Naive thymus-derived CD4-positive, alpha-beta T cell (primary cell): ENCODE measurements at regions of chr7 and their contacts with region 1.

Region 1: DNA sequence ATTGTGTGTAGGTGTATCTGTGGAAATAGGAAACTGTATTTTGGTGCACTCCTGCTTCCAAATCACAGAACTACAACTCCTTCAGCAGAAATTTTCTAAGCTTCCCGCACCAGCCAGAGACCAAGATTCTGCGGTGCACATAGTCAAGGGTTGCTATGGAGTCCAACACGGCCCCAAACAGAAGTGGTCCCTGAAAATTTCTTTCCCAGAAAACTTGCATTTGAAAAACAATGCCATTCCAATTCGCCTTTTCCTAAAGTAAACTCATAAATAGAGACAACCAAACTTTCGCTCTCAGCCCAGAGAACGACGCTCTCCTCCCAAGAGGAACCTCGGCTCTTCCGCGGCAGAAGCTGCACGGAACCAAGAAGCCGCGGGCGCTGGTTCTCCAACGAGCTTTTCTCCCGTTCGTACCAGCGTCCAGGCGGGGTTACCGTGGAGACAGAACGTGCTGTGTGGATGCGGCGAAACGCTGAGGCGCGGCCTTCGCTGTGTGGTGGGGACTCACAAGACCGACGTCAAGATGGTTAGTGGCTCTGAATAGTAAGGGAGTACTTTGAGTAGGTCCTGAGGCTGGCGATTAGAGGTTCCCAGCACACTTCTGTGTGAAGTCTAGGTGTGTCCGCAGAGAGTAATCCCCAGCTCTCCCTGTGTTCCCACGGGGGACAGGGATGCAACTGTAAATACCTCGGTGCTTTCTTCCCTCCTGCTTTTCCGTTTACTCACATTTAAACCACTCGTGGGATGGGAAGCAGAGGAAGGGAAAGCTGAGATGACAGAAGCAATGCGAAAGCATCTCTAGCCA is 24.0 kb upstream of the ZC3HAV1 start:
- DNase-seq: peak; percentile 68 to 86 (median 83)
- ATAC-seq: peak; percentile 98
- H3K4me3 ChIP-seq: peak overlapping the region; percentile 86
- H3K4me3 Mint-ChIP-seq: peak overlapping the region; percentile 85 to 96 (median 90)
- H3K27ac ChIP-seq: peak overlapping the region; percentile 72
- H3K27ac Mint-ChIP-seq: peak overlapping the region; percentile 76 to 95 (median 85)
- H3K4me1 ChIP-seq: peaks cover 0 to 10% of the 10 kb centered on the region in 2 donors
- H3K4me1 Mint-ChIP-seq: peaks cover 11 to 33% (median 16%) of the 10 kb centered on the region in 7 donors
- H3K27me3 ChIP-seq: no peaks in the 10 kb centered on the region
- H3K27me3 Mint-ChIP-seq: peaks cover 0 to 5% (median 0%) of the 10 kb centered on the region in 5 donors

Region 2: GRCh38 chr7:137343281-137343841 is 1790.2 kb before region 1 on chr7 and contains the start of gene PTN:
- CTCF ChIA-PET with region 1: no interaction called
- POLR2A ChIA-PET with region 1: no interaction called
- intact Hi-C with region 1: no loop called
- DNase-seq: no peak
- ATAC-seq: no peak
- H3K4me3 ChIP-seq: no peak within 1 kb of the TSS
- H3K4me3 Mint-ChIP-seq: no peak within 1 kb of the TSS
- H3K27ac ChIP-seq: no peak within 1 kb of the TSS
- H3K27ac Mint-ChIP-seq: no peak within 1 kb of the TSS
- H3K4me1 ChIP-seq: no peaks in the 10 kb centered on the region
- H3K4me1 Mint-ChIP-seq: peaks cover 0 to 2% (median 0%) of the 10 kb centered on the region in 7 donors
- H3K27me3 ChIP-seq: no peaks in the 10 kb centered on the region
- H3K27me3 Mint-ChIP-seq: peaks cover 9 to 30% (median 15%) of the 10 kb centered on the region in 5 donors
- total RNA-seq, gene PTN: not detected

Region 3: GRCh38 chr7:138898255-138898654 is 235.3 kb before region 1 on chr7:
- CTCF ChIA-PET with region 1: no interaction called
- POLR2A ChIA-PET with region 1: interaction called, 5 read pairs
- intact Hi-C with region 1: loop called (anchors 5 kb)
- DNase-seq: peak in 4 of 9 donors; percentile 14 to 36 (median 18)
- ATAC-seq: peak; percentile 49
- H3K4me3 ChIP-seq: no peak overlapping the region
- H3K4me3 Mint-ChIP-seq: peak overlapping the region in 7 of 10 donors; percentile 12 to 56 (median 27)
- H3K27ac ChIP-seq: no peak overlapping the region
- H3K27ac Mint-ChIP-seq: peak overlapping the region in 7 of 9 donors; percentile 16 to 75 (median 46)
- H3K4me1 ChIP-seq: peaks cover 9 to 26% of the 10 kb centered on the region in 2 donors
- H3K4me1 Mint-ChIP-seq: peaks cover 20 to 53% (median 48%) of the 10 kb centered on the region in 7 donors
- H3K27me3 ChIP-seq: no peaks in the 10 kb centered on the region
- H3K27me3 Mint-ChIP-seq: peaks cover 0 to 66% (median 0%) of the 10 kb centered on the region in 5 donors

Region 4: DNA sequence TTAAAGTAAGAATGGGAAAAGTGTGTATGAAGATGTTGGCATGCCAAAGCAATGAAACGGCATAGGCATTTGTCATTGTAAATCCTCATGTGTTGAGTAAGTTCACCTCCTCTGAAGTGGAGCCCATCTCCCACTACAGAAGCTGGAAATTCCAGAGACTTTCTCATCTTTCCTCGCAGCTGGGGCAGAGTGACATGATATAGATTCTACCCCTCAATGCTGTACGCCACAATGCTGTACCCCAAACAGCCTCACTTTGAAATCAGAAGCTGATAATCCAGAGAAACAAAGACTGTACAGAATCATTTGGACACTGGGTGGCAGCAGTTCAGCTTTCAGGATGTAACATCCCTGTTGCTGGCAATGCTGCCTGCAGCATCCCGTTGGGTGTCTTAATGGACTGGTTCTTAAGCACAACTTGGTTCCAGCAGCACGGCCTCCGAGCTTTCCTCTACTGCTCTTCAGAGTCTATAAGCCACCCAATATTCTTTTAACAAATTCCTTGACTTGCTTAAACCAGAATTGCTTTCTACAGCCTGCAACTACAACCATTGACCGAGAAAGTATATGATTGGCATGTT is 116.5 kb before region 1 on chr7:
- CTCF ChIA-PET with region 1: interaction called, 74 read pairs
- POLR2A ChIA-PET with region 1: no interaction called
- intact Hi-C with region 1: no loop called
- DNase-seq: peak; percentile 17 to 76 (median 52)
- ATAC-seq: peak; percentile 94
- H3K4me3 ChIP-seq: no peak overlapping the region
- H3K4me3 Mint-ChIP-seq: no peak overlapping the region
- H3K27ac ChIP-seq: no peak overlapping the region
- H3K27ac Mint-ChIP-seq: peak overlapping the region in 1 of 9 donors; percentile 52
- H3K4me1 ChIP-seq: no peaks in the 10 kb centered on the region
- H3K4me1 Mint-ChIP-seq: peaks cover 0 to 10% (median 6%) of the 10 kb centered on the region in 7 donors
- H3K27me3 ChIP-seq: no peaks in the 10 kb centered on the region
- H3K27me3 Mint-ChIP-seq: peaks cover 0 to 16% (median 5%) of the 10 kb centered on the region in 5 donors

Region 5: GRCh38 chr7:139109188-139109982 is 24.2 kb before region 1 on chr7 and contains the start of gene ZC3HAV1:
- CTCF ChIA-PET with region 1: interaction called, 14 read pairs
- POLR2A ChIA-PET with region 1: interaction called, 5 read pairs
- intact Hi-C with region 1: loop called (anchors 1 kb)
- DNase-seq: peak; percentile 68 to 94 (median 90)
- ATAC-seq: peak; percentile 91
- H3K4me3 ChIP-seq: peak within 1 kb of the TSS; percentile 80
- H3K4me3 Mint-ChIP-seq: peak within 1 kb of the TSS; percentile 92 to 100 (median 98)
- H3K27ac ChIP-seq: peak within 1 kb of the TSS; percentile 93
- H3K27ac Mint-ChIP-seq: peak within 1 kb of the TSS; percentile 96 to 100 (median 98)
- H3K4me1 ChIP-seq: peaks cover 13 to 22% of the 10 kb centered on the region in 2 donors
- H3K4me1 Mint-ChIP-seq: peaks cover 24 to 49% (median 42%) of the 10 kb centered on the region in 7 donors
- H3K27me3 ChIP-seq: no peaks in the 10 kb centered on the region
- H3K27me3 Mint-ChIP-seq: no peaks in the 10 kb centered on the region
- total RNA-seq, gene ZC3HAV1: 129 to 181 (median 152) TPM

Region 6: DNA sequence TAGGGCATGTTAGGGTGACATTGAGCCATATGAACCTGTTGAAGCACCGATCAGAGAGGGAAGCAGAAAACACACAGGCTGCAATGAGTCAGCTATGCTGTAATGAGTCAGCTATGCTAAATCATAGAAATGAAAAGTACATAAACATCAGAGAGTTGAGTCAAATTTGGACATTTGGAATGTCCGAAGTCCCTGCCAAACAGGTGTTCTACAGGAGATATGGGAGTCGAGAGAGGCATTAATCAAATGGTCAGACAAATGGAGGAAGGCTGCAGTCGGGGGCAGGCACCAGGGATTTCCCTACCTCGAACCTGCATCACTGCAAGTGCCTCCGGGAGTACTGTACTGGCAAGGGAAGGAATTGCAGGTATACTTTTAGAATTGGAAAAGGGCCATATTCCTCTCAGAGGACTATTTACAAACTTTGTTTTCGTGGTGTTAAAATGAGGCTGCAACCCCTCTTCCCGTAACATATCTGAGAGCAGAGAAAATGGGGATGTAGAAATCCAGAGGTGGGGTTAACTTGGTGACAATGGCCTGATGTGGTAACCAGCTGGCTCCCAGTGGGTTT is 15.2 kb before region 1 on chr7:
- CTCF ChIA-PET with region 1: interaction called, 14 read pairs
- POLR2A ChIA-PET with region 1: interaction called, 4 read pairs
- intact Hi-C with region 1: loop called (anchors 1 kb)
- DNase-seq: no peak
- ATAC-seq: peak; percentile 37
- H3K4me3 ChIP-seq: peak overlapping the region; percentile 39
- H3K4me3 Mint-ChIP-seq: peak overlapping the region in 9 of 10 donors; percentile 22 to 82 (median 72)
- H3K27ac ChIP-seq: peak overlapping the region; percentile 52
- H3K27ac Mint-ChIP-seq: peak overlapping the region in 8 of 9 donors; percentile 34 to 94 (median 88)
- H3K4me1 ChIP-seq: peaks cover 12 to 30% of the 10 kb centered on the region in 2 donors
- H3K4me1 Mint-ChIP-seq: peaks cover 26 to 54% (median 49%) of the 10 kb centered on the region in 7 donors
- H3K27me3 ChIP-seq: no peaks in the 10 kb centered on the region
- H3K27me3 Mint-ChIP-seq: peaks cover 0 to 5% (median 0%) of the 10 kb centered on the region in 5 donors

Region 7: DNA sequence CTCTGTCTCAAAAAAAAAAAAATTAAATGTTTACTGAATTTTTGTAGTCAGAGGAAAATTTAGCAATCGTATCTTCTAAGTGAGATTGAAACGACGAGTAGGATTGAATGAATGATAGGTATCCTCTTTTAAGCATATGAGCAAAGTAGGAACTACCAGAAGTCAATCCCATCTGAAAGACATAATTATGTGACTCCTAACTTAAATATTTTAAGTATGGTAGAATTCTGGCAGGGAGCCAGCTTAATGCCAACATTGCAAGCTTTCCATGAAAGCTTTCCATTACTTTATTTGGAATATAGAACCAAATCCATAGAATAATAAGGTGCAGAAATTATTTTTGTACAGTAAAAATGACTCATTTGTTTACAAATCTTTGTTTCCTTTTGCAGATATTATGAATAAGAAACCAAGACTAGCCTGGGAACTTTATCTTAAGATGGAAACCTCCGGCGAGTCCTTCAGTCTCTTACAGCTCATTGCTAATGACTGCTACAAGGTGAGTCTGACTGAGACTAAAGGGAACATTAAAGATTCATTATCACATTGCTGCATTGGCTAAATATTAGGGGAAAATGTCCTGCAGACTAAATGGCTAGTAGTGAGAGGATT is 47.3 kb after region 1 on chr7:
- CTCF ChIA-PET with region 1: no interaction called
- POLR2A ChIA-PET with region 1: no interaction called
- intact Hi-C with region 1: no loop called
- DNase-seq: no peak
- ATAC-seq: no peak
- H3K4me3 ChIP-seq: no peak overlapping the region
- H3K4me3 Mint-ChIP-seq: no peak overlapping the region
- H3K27ac ChIP-seq: no peak overlapping the region
- H3K27ac Mint-ChIP-seq: no peak overlapping the region
- H3K4me1 ChIP-seq: no peaks in the 10 kb centered on the region
- H3K4me1 Mint-ChIP-seq: peaks cover 0 to 4% (median 3%) of the 10 kb centered on the region in 7 donors
- H3K27me3 ChIP-seq: no peaks in the 10 kb centered on the region
- H3K27me3 Mint-ChIP-seq: no peaks in the 10 kb centered on the region